ENCODE measurements at regions of chr12 and their contacts with region 1.

Region 1: GRCh38 chr12:109093022-109093918 is at the start of gene ALKBH2:
- DNase-seq: peak; percentile 92
- H3K4me3 Mint-ChIP-seq: peak within 1 kb of the TSS; percentile 89
- H3K27ac Mint-ChIP-seq: peak within 1 kb of the TSS; percentile 84
- H3K4me1 Mint-ChIP-seq: peaks cover 22% of the 10 kb centered on the region
- H3K27me3 Mint-ChIP-seq: no peaks in the 10 kb centered on the region
- total RNA-seq, gene ALKBH2: 43.6 and 47.4 TPM in 2 replicates

Region 2: GRCh38 chr12:107760809-107761501 is 1332.3 kb before region 1 on chr12 and contains the start of gene PRDM4:
- intact Hi-C with region 1: loop called (anchors 2 kb)
- DNase-seq: peak; percentile 91
- H3K4me3 Mint-ChIP-seq: peak within 1 kb of the TSS; percentile 92
- H3K27ac Mint-ChIP-seq: peak within 1 kb of the TSS; percentile 89
- H3K4me1 Mint-ChIP-seq: peaks cover 40% of the 10 kb centered on the region
- H3K27me3 Mint-ChIP-seq: peaks cover 3% of the 10 kb centered on the region
- total RNA-seq, gene PRDM4: 28.1 and 30.2 TPM in 2 replicates

Region 3: GRCh38 chr12:108618079-108618952 is 475.0 kb before region 1 on chr12:
- intact Hi-C with region 1: loop called (anchors 5 kb)
- DNase-seq: peak; percentile 69
- H3K4me3 Mint-ChIP-seq: no peak overlapping the region
- H3K27ac Mint-ChIP-seq: peak overlapping the region; percentile 57
- H3K4me1 Mint-ChIP-seq: peaks cover 57% of the 10 kb centered on the region
- H3K27me3 Mint-ChIP-seq: peaks cover 2% of the 10 kb centered on the region

Region 4: GRCh38 chr12:108731105-108731865 is 362.0 kb before region 1 on chr12 and contains the start of gene CORO1C:
- intact Hi-C with region 1: loop called (anchors 2 kb)
- DNase-seq: peak; percentile 96
- H3K4me3 Mint-ChIP-seq: peak within 1 kb of the TSS; percentile 89
- H3K27ac Mint-ChIP-seq: peak within 1 kb of the TSS; percentile 94
- H3K4me1 Mint-ChIP-seq: peaks cover 38% of the 10 kb centered on the region
- H3K27me3 Mint-ChIP-seq: peaks cover 16% of the 10 kb centered on the region
- total RNA-seq, gene CORO1C: 46.1 and 49.7 TPM in 2 replicates

Region 5: DNA sequence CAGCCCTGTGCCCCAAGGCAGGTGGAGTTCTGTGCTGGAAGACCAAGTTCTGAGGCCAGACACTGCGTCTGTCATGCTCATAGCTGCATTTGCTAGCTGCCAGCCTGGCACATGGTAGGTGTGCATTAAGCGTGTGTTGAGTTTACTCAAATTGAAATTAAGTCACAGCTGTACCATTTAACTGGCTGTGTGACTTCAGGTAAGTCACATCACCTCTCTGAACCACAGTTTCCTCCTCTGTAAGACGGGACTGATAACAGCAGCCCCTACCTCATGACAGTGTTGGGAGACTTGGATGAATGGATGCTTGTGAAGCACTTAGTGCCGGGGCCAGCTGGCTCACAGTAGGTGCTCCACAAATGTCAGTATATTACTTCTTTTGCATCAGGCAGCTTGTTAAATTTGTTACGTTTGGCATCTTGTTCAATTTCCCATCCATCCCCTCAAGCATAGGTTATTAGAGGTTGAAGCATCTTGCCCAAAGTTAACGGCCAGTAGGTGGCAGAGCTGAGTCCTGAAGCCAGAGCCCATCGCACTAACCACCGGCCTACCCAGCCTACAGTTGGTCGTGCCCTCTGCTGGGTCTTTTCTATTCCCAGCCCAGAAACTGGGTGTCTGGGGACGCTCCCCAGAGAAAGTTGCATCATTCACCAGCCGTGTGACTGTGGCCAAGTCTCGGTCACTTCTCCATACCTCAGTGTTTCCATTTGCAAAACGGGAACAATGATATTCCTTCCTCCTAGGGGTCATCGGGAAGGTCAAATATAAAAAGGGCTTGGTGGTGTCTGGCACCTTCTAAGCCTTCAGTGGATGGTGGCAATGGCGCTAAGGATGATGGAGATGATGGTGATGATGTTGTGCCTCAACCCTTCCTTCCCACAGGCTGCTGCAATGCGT is 208.9 kb before region 1 on chr12:
- intact Hi-C with region 1: loop called (anchors 1 kb)
- DNase-seq: peak; percentile 25
- H3K4me3 Mint-ChIP-seq: no peak overlapping the region
- H3K27ac Mint-ChIP-seq: no peak overlapping the region
- H3K4me1 Mint-ChIP-seq: no peaks in the 10 kb centered on the region
- H3K27me3 Mint-ChIP-seq: peaks cover 7% of the 10 kb centered on the region

Region 6: DNA sequence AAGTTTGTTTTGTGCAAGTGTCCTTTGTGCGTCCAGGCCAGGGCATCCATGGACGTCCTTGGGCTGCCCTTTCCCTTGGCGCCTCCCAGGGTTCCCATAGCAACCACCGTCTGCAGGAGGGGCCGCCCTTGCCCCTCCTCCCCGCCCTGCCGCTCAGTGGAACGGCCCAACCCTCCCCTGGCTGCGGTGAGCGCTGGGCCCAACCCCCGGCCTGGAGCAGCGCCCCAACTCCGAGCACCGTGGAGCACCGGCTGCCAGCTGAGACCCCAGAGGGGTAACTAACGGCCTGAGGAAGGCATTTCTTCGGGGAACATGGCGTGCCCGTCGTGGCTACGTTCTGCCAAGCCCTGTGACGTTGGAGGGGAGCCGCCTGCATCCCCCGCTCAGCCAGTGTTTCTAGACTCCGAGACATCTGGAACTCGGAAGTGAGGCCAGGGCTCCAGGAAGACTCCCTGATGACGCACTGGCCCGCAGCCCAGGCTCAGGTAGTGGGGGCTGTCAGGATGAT is 17.8 kb after region 1 on chr12:
- intact Hi-C with region 1: loop called (anchors 1 kb)
- DNase-seq: peak; percentile 34
- H3K4me3 Mint-ChIP-seq: peak overlapping the region; percentile 74
- H3K27ac Mint-ChIP-seq: peak overlapping the region; percentile 58
- H3K4me1 Mint-ChIP-seq: peaks cover 19% of the 10 kb centered on the region
- H3K27me3 Mint-ChIP-seq: no peaks in the 10 kb centered on the region

Region 7: GRCh38 chr12:109573029-109573913 is 480.0 kb after region 1 on chr12 and contains the starts of genes MMAB and MVK:
- intact Hi-C with region 1: loop called (anchors 2 kb)
- DNase-seq: peak; percentile 99
- H3K4me3 Mint-ChIP-seq: peak within 1 kb of the TSS; percentile 91
- H3K27ac Mint-ChIP-seq: peak within 1 kb of the TSS; percentile 88
- H3K4me1 Mint-ChIP-seq: peaks cover 30% of the 10 kb centered on the region
- H3K27me3 Mint-ChIP-seq: no peaks in the 10 kb centered on the region
- total RNA-seq, gene MMAB: 41.9 and 42.2 TPM in 2 replicates
- total RNA-seq, gene MVK: 14.2 and 15.8 TPM in 2 replicates

Measured in activated T-helper 1 cell treated with anti-CD3 and anti-CD28 coated beads, Interleukin-12 subunit alpha, Interleukin-12 subunit beta, Interleukin-2, Interleukin-4 antibody, amounts not matched to agents 30 ng/mL and 10 ng/mL and 1 ng/mL, durations not matched to agents 14 hours and 24 hours and 36 hours (primary cell).